Left cardiac atrium (tissue), 4 donors: ENCODE measurements at regions of chr21 and their contacts with region 1.

Region 1: DNA sequence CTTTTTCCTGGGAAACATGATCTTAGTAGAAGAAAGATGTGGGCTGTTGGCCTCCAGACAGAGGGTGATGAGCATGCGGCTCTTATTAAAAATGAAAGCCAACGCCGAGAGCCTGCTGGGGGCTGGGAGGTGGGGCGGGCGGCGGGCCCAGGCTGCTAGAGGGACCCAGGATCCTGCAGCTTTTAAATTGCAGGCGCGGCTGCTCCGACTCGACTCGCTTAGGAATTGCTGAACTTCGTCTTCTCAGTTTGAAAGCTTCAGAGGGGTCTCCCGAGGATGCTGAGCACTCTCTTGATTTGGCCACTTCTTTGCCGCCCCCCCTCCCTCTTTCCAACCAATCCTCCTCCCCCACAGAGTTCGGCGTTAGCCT is 1.2 kb downstream of the AGPAT3 start:
- DNase-seq: peak; percentile 40
- ATAC-seq: peak; percentile 62 to 71

Region 2: DNA sequence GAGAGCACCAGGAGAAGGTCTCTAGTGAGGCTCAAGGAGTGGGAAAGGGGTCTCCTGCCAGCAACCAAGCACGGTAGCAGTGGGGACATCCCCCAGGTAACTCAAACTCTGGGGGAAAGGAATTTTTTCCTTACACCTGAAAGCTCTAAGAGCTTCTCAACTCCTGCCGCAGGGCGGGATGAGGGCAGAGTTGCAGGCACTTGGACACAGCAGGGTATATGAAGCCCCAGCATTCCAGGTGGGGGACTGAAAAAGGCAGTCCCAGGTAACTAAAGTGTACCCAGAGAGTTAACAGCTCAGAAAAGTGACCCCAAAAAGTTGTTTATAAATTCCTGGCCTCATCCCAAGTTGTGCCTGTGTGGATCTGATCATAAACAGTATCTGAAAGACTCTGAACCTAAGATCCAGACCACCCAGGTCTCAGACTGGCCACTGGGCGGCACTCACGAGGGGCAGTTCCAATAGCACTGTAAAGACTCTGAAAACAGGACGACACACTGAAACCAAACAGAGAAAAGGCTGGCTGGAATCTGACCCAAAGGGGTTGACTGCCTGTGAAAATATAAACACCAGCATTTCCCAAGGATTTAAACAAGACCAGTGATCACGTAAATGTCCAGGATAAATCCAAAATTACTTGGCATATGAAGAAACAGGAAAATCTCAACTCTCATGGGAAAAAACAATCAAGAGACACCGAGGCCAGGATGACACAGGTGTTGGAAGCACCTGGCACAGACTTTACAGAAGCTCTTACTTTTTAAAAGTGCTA is 254.5 kb before region 1 on chr21:
- intact Hi-C with region 1: no loop called
- DNase-seq: peak; percentile 75
- ATAC-seq: peak; percentile 73 to 82

Region 3: GRCh38 chr21:43810505-43811261 is 55.6 kb before region 1 on chr21:
- intact Hi-C with region 1: loop called in 1 of 2 experiments (anchors 10 kb)
- DNase-seq: peak; percentile 86
- ATAC-seq: peak; percentile 71 to 75

Region 4: DNA sequence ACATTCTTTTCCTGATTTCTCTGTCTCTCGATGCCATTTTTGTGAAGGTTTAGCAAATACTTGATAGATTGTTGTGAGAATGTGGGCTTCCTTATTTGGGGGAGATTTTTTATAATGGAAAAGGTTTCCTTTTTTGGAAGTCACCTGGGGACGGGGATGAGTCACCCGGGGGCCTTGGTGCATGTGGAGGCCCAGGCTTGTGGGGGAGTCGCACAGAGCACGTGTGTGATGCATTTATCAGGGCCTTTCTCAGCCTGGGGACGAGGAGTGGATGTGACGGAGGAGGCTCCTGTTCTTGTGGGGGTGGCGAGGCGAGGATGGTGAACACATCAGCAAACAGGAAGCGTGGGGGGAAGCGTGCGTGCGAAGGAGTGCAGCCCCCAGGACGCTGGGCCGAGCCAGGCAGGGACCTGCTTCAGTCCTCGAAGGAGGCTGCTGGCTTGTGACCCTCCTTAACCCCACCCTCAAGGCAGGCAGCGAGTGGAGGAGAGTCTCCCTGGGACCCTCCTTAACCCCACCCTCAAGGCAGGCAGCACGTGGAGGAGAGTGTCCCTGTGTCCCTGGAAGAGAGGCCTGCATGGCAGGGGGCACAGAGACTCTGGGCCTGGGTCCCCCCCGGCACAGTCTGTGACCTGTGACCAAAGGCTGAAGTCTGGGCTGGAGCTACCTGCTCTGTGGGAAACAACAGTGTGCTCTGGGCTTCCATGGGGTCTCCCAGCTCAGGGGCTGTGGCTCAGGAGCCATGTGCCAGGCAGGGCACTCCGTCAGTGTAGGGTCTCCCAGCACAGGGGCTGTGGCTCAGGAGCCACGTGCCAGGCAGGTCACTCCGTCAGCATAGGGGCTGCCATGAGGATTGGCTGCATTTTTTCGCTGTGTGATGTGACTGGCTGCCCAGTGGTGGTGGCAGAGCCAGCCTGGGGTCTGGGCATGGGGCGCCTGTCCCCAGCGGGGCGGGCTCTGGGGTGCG is 56.0 kb after region 1 on chr21:
- intact Hi-C with region 1: loop called (anchors 5 kb)
- DNase-seq: no peak
- ATAC-seq: no peak

Region 5: GRCh38 chr21:43929217-43930025 is 63.2 kb after region 1 on chr21:
- intact Hi-C with region 1: loop called (anchors 5 kb)
- DNase-seq: peak; percentile 79
- ATAC-seq: peak; percentile 86 to 87